CD8-positive, alpha-beta T cell (primary cell): ENCODE measurements at regions of chr17 and their contacts with region 1.

Region 1: GRCh38 chr17:38351412-38352222 is at the start of gene SOCS7:
- DNase-seq: peak; percentile 80 to 97 (median 94)
- ATAC-seq: peak; percentile 87
- H3K4me3 ChIP-seq: peak within 1 kb of the TSS; percentile 60 to 84
- H3K4me3 Mint-ChIP-seq: peak within 1 kb of the TSS; percentile 94
- H3K27ac ChIP-seq: peak within 1 kb of the TSS; percentile 56 to 90
- H3K27ac Mint-ChIP-seq: peak within 1 kb of the TSS; percentile 94
- H3K4me1 ChIP-seq: peaks cover 21% of the 10 kb centered on the region
- H3K4me1 Mint-ChIP-seq: peaks cover 43% of the 10 kb centered on the region
- H3K27me3 ChIP-seq: no peaks in the 10 kb centered on the region
- H3K27me3 Mint-ChIP-seq: no peaks in the 10 kb centered on the region
- CTCF ChIP-seq: no peak
- total RNA-seq, gene SOCS7: 10.6 to 11.4 TPM

Region 2: DNA sequence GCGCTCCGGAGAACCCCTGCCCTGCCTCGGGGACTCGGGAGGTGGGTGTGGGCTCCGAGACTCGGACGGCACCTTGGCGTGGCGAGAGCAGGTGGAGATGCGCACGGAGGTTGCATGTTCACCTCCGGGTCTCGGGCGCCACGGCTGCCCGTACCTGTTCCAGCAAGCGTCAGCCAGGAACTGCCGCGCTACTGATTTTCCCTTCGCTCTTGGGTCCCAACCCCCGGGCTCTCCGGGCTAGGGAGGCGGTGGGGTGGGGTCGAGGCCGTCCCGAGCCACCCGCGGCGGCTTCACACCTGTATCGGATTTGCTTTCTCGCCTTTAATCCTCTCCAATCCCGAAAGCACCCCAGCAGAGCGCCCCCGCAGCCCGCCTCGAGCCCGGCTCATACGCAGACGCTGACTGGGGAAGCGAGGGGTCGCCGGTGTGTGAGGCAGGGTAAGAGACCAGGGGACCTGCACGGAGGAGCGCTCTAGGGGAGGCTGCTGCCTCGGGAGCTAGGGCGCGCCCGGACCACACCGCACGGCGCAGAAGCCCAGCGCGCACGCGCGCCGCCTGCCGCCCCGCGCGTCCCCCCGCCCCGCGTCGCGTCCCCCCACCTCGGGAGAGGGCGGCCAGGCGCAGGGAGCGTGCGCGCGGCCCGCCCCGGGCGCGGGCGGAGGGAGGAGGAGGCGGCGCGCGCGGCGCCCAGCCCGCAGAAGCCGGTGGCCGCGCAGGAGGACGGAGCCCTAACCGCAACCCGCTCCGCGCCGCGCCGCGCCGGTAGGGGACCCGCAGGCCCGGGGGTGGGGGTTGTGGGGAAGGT is 862.2 kb before region 1 on chr17 and contains the start of gene DUSP14:
- CTCF ChIA-PET with region 1: no interaction called
- POLR2A ChIA-PET with region 1: no interaction called
- intact Hi-C with region 1: loop called in 1 of 2 experiments (anchors 5 kb)
- DNase-seq: peak; percentile 68 to 95 (median 84)
- ATAC-seq: peak; percentile 80
- H3K4me3 ChIP-seq: peak within 1 kb of the TSS; percentile 75 to 98
- H3K4me3 Mint-ChIP-seq: peak within 1 kb of the TSS; percentile 90
- H3K27ac ChIP-seq: peak within 1 kb of the TSS; percentile 72 to 81
- H3K27ac Mint-ChIP-seq: peak within 1 kb of the TSS; percentile 93
- H3K4me1 ChIP-seq: peaks cover 26% of the 10 kb centered on the region
- H3K4me1 Mint-ChIP-seq: peaks cover 27% of the 10 kb centered on the region
- H3K27me3 ChIP-seq: no peaks in the 10 kb centered on the region
- H3K27me3 Mint-ChIP-seq: no peaks in the 10 kb centered on the region
- CTCF ChIP-seq: no peak
- total RNA-seq, gene DUSP14: 5.5 to 6.8 TPM

Region 3: GRCh38 chr17:38338053-38338452 is 13.6 kb before region 1 on chr17:
- CTCF ChIA-PET with region 1: interaction called, 11 read pairs
- POLR2A ChIA-PET with region 1: no interaction called
- intact Hi-C with region 1: no loop called
- DNase-seq: no peak
- ATAC-seq: no peak
- H3K4me3 ChIP-seq: no peak overlapping the region
- H3K4me3 Mint-ChIP-seq: no peak overlapping the region
- H3K27ac ChIP-seq: no peak overlapping the region
- H3K27ac Mint-ChIP-seq: no peak overlapping the region
- H3K4me1 ChIP-seq: no peaks in the 10 kb centered on the region
- H3K4me1 Mint-ChIP-seq: no peaks in the 10 kb centered on the region
- H3K27me3 ChIP-seq: peaks cover 0 to 3% of the 10 kb centered on the region in 2 experiments
- H3K27me3 Mint-ChIP-seq: peaks cover 9% of the 10 kb centered on the region
- CTCF ChIP-seq: no peak

Region 4: DNA sequence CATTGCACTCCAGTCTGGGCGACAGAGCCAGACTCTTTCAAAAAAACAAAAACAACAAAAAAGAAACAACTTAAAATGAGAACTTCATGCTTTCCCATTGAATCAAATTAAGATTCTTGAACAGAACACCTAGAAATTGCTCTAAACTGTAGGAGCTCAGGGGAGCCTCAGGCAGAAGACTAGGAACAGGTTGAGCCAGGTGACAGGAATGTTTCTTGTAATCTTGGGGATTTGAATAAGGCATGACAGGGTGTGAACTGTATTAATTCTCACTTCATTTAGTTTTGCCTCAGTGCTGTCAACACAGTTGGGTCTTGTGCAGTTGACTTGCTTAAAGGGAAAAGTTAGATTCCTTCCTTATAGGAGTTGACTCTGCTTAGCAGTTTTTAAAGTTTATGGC is 27.8 kb after region 1 on chr17:
- CTCF ChIA-PET with region 1: interaction called, 11 read pairs
- POLR2A ChIA-PET with region 1: no interaction called
- intact Hi-C with region 1: no loop called
- DNase-seq: no peak
- ATAC-seq: no peak
- H3K4me3 ChIP-seq: no peak overlapping the region
- H3K4me3 Mint-ChIP-seq: no peak overlapping the region
- H3K27ac ChIP-seq: no peak overlapping the region
- H3K27ac Mint-ChIP-seq: no peak overlapping the region
- H3K4me1 ChIP-seq: no peaks in the 10 kb centered on the region
- H3K4me1 Mint-ChIP-seq: no peaks in the 10 kb centered on the region
- H3K27me3 ChIP-seq: no peaks in the 10 kb centered on the region
- H3K27me3 Mint-ChIP-seq: no peaks in the 10 kb centered on the region
- CTCF ChIP-seq: no peak

Region 5: DNA sequence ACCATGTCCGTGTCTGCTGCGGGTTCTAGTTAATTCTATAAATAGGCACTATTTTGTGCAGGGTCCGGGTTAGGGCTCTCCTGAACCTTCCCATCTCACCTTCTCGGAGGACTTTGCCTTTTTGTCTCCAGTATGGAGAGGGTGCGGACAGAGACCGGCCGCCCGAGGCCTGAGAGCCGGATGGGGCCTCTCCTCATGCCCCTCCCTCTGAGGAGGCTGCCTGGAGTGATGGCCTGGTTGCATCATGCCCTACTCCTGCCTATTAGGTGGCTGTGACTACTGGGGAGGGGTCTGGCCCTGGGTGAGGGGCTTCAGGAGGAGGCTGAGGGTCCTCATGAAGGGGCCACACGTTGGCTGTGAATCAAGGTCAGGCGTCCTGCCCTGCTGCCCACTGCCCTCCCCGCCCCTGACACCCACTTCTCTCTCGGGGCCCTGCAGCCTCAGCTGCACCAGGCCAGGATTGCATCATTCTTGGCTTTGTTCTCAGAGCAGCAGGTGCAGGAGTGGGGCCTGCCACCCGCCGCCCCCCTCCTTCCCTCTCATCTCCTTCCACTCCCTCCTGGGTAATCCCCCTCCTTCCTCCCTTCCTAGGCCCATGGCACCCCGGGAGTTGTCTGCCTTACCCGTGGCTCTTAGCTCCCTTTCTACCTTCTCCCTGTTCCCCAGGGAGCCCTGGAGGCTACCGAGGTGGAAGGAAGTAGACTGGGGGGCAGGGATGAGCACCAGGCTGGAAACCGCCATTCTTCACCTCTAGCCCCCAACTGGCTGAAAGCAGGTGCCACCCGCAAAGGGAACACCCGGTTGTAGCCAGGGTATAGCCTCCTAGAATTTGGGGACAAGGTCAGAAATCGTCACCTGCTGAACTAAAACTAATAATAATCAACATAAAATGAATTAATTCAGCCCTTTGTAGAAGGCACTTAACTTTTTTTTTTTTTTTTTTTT is 63.9 kb after region 1 on chr17:
- CTCF ChIA-PET with region 1: interaction called, 320 read pairs
- POLR2A ChIA-PET with region 1: interaction called, 15 read pairs
- intact Hi-C with region 1: loop called (anchors 1 kb)
- DNase-seq: no peak
- ATAC-seq: no peak
- H3K4me3 ChIP-seq: no peak overlapping the region
- H3K4me3 Mint-ChIP-seq: no peak overlapping the region
- H3K27ac ChIP-seq: no peak overlapping the region
- H3K27ac Mint-ChIP-seq: no peak overlapping the region
- H3K4me1 ChIP-seq: peaks cover 8% of the 10 kb centered on the region
- H3K4me1 Mint-ChIP-seq: peaks cover 3% of the 10 kb centered on the region
- H3K27me3 ChIP-seq: peaks cover 7 to 12% of the 10 kb centered on the region in 2 experiments
- H3K27me3 Mint-ChIP-seq: peaks cover 40% of the 10 kb centered on the region
- CTCF ChIP-seq: no peak

Region 6: GRCh38 chr17:38485146-38485468 is 133.5 kb after region 1 on chr17:
- CTCF ChIA-PET with region 1: interaction called, 3 read pairs
- POLR2A ChIA-PET with region 1: no interaction called
- intact Hi-C with region 1: loop called in 1 of 2 experiments (anchors 5 kb)
- DNase-seq: no peak
- ATAC-seq: no peak
- H3K4me3 ChIP-seq: no peak overlapping the region
- H3K4me3 Mint-ChIP-seq: no peak overlapping the region
- H3K27ac ChIP-seq: no peak overlapping the region
- H3K27ac Mint-ChIP-seq: no peak overlapping the region
- H3K4me1 ChIP-seq: no peaks in the 10 kb centered on the region
- H3K4me1 Mint-ChIP-seq: peaks cover 6% of the 10 kb centered on the region
- H3K27me3 ChIP-seq: no peaks in the 10 kb centered on the region
- H3K27me3 Mint-ChIP-seq: peaks cover 7% of the 10 kb centered on the region
- CTCF ChIP-seq: no peak